ENCODE measurements at regions of chr3 and their contacts with region 1.

Region 1: GRCh38 chr3:187789945-187790344 is 44.7 kb upstream of the BCL6 start:
- DNase-seq: no peak
- H3K4me3 ChIP-seq: no peak overlapping the region
- H3K4me3 Mint-ChIP-seq: peak overlapping the region in 1 of 7 donors; percentile 21
- H3K27ac ChIP-seq: no peak overlapping the region
- H3K27ac Mint-ChIP-seq: peak overlapping the region in 2 of 8 donors; percentile 1 to 77
- H3K4me1 ChIP-seq: no peaks in the 10 kb centered on the region
- H3K4me1 Mint-ChIP-seq: peaks cover 7 to 14% (median 12%) of the 10 kb centered on the region in 3 donors
- H3K27me3 ChIP-seq: no peaks in the 10 kb centered on the region
- H3K27me3 Mint-ChIP-seq: peaks cover 0 to 1% of the 10 kb centered on the region in 2 donors

Region 2: GRCh38 chr3:186746008-186746407 is 1043.9 kb before region 1 on chr3:
- CTCF ChIA-PET with region 1: no interaction called
- POLR2A ChIA-PET with region 1: interaction called, 12 read pairs
- DNase-seq: no peak
- H3K4me3 ChIP-seq: no peak overlapping the region
- H3K4me3 Mint-ChIP-seq: no peak overlapping the region
- H3K27ac ChIP-seq: no peak overlapping the region
- H3K27ac Mint-ChIP-seq: no peak overlapping the region
- H3K4me1 ChIP-seq: no peaks in the 10 kb centered on the region
- H3K4me1 Mint-ChIP-seq: no peaks in the 10 kb centered on the region
- H3K27me3 ChIP-seq: no peaks in the 10 kb centered on the region
- H3K27me3 Mint-ChIP-seq: peaks cover 0 to 4% of the 10 kb centered on the region in 2 donors

Region 3: DNA sequence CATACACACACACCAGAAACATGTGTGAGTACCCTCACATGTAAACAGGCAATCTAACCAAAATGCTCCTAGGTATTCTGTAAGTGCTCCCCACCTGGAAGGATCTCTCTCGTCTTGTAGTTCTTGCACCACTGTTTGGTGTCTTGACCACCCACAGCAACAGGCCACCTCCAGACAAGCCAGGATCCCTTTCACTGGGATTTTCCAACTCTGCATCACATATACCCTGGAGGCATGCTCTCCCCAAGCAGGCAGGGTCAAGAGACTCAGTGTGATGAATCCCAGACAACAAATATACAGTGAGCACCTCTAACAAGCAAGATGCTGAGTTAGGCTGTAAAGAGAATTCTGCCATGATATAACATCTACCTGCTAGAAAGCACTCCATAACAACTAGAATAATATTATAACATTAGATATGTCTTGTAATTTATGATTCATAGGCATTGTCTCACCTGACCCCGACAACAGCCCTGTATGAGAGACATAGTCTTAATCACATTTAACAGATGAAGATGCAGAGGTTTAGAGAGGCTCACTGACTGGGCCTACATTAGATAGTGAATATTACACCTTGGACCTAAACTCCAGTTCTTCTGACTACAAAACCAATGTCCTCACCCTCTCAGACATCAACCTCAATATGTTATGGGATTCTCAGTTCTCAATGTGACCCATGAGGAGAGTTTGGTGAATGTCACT is 31.8 kb after region 1 on chr3:
- CTCF ChIA-PET with region 1: no interaction called
- POLR2A ChIA-PET with region 1: no interaction called
- DNase-seq: no peak
- H3K4me3 ChIP-seq: no peak overlapping the region
- H3K4me3 Mint-ChIP-seq: peak overlapping the region in 2 of 7 donors; percentile 28 to 52
- H3K27ac ChIP-seq: no peak overlapping the region
- H3K27ac Mint-ChIP-seq: peak overlapping the region; percentile 35 to 93 (median 82)
- H3K4me1 ChIP-seq: peaks cover 14% of the 10 kb centered on the region
- H3K4me1 Mint-ChIP-seq: peaks cover 22 to 32% (median 23%) of the 10 kb centered on the region in 3 donors
- H3K27me3 ChIP-seq: no peaks in the 10 kb centered on the region
- H3K27me3 Mint-ChIP-seq: no peaks in the 10 kb centered on the region